ENCODE measurements at regions of chr2 and their contacts with region 1.

Region 1: DNA sequence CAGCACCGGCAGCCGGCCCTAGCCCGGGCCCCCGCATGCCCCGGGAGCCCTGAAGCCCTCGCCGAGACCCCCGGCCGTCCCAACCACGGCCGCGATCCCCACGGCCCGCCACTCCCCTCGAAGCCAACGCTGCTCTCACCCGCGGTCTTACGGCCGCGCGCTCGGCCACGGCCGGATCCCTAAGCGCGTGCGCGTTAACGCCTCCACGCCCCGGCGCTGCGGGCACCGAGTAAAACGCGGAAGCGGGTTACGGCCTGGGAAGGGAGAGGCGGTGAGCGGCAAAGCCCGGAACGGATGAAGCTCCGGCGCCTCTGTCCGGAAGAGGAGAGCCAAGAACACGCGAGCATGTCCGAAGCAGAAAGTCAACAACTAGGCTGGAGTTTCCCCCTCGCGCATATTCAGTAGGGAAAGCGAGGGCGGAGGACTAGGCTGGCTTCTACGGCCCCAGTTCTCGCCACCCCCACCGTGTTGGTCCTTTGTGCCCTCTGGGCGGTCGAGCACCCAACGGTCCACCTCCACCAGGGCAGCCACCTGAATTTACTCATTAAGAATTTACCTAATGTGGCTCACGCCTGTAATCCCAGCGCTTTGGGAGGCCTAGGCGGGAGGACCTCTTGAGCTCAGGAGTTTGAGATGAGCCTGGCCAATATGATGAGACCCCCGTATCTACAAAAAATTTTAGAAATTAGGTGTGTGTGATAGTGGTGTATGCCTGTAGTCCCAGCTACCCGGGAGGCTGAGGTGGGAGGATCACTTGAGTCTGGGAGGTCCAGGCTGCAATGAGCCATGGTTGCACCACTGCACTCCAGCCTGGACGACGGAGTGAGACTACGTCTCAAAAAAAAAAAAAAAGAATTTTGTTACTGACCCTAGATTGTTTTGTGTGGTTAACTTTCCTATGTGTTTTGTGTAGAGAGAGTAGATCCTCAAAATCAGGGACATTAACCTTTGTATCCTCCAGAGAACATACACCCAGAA is at the start of gene KANSL3:
- DNase-seq: peak; percentile 89 to 91
- ATAC-seq: peak; percentile 84 to 92 (median 90)
- H3K4me3 ChIP-seq: peak within 1 kb of the TSS; percentile 60 to 90 (median 74)
- H3K27ac ChIP-seq: peak within 1 kb of the TSS; percentile 88 to 98 (median 94)
- H3K4me1 ChIP-seq: peaks cover 0 to 52% (median 36%) of the 10 kb centered on the region in 9 donors
- H3K27me3 ChIP-seq: no peaks in the 10 kb centered on the region
- CTCF ChIP-seq: no peak
- total RNA-seq, gene KANSL3: 25.4 to 38.1 (median 31.7) TPM

Region 2: DNA sequence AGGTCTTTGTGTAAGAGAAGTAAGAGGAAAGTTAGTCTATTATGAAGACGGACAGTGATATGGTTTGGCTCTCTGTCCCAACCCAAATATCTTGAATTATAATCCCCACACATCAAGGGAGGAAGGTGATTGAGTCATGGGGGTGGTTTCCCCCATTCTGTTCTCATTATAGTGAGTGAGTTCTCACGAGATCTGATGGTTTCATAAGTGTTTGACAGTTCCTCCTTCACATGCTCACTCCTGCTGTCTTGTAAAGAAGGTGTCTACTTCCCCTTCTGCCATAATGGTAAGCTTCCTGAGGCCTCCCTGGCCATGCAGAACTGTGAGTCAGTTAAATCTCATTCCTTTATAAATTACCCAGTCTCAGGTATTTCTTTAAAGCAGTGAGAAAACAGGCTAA is 200.9 kb before region 1 on chr2:
- intact Hi-C with region 1: no loop called
- DNase-seq: no peak
- ATAC-seq: no peak
- H3K4me3 ChIP-seq: no peak overlapping the region
- H3K27ac ChIP-seq: no peak overlapping the region
- H3K4me1 ChIP-seq: no peaks in the 10 kb centered on the region
- H3K27me3 ChIP-seq: no peaks in the 10 kb centered on the region
- CTCF ChIP-seq: no peak

Region 3: GRCh38 chr2:96536445-96537065 is 101.9 kb before region 1 on chr2 and contains the start of gene ARID5A:
- intact Hi-C with region 1: loop called in 2 of 10 experiments (anchors 10 kb)
- DNase-seq: peak; percentile 95 to 96
- ATAC-seq: peak; percentile 69 to 88 (median 76)
- H3K4me3 ChIP-seq: peak within 1 kb of the TSS; percentile 73 to 99 (median 96)
- H3K27ac ChIP-seq: peak within 1 kb of the TSS; percentile 68 to 100 (median 97)
- H3K4me1 ChIP-seq: peaks cover 29 to 89% (median 76%) of the 10 kb centered on the region in 9 donors
- H3K27me3 ChIP-seq: no peaks in the 10 kb centered on the region
- CTCF ChIP-seq: peak; percentile 13 to 59 (median 42)
- total RNA-seq, gene ARID5A: 12.0 to 121 (median 43.5) TPM

Region 4: DNA sequence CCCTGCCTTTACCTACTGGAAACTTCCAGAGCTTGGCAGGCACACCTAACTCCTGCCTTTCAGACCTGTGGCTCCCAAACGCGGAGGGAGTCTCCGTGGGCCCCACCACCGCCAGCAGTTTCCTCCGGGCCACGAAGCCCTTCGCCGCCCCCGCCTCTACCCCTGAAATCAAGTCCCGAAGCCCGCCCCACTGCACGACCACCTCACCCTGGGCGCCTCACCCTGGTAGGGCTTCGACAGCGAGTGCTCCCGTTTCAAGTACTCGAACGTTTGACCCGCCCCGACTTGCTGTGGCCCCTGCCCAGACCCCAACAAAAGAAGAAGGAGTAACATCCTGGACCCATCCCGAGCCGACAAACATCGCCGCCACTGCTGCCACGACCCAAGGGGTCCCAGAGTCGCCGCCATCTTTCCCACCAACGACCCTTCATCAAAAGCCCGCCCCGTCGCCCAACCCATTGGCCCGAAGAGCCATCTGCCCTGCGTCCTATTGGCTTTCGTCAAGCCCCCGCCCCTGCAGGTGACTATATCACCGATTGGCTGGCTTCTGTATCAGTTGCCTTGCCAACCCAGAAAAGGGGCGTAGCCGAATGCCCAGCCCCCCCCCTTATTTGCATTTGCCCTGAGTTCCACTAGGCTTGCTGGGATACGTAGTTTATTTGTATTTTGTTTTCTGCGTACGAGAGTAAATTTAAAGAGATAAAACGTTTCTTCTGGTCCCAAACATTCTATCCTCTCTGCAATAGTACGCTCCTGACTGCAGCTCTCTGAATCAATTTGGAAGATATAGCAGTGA is 101.4 kb after region 1 on chr2 and contains the start of gene LMAN2L:
- intact Hi-C with region 1: loop called in 4 of 10 experiments (anchors 1 to 5 kb)
- DNase-seq: peak; percentile 95 to 99
- ATAC-seq: peak; percentile 96 to 100 (median 100)
- H3K4me3 ChIP-seq: peak within 1 kb of the TSS; percentile 69 to 93 (median 80)
- H3K27ac ChIP-seq: peak within 1 kb of the TSS; percentile 34 to 84 (median 76)
- H3K4me1 ChIP-seq: peaks cover 0 to 49% (median 28%) of the 10 kb centered on the region in 9 donors
- H3K27me3 ChIP-seq: no peaks in the 10 kb centered on the region
- CTCF ChIP-seq: peak in 1 of 9 donors; percentile 15
- total RNA-seq, gene LMAN2L: 13.3 to 30.9 (median 18.8) TPM

Region 5: GRCh38 chr2:96816128-96816835 is 177.8 kb after region 1 on chr2 and contains the start of gene CNNM3:
- intact Hi-C with region 1: loop called in 1 of 10 experiments (anchors 10 kb)
- DNase-seq: peak; percentile 97 to 98
- ATAC-seq: peak; percentile 94 to 98 (median 96)
- H3K4me3 ChIP-seq: peak within 1 kb of the TSS; percentile 27 to 96 (median 84)
- H3K27ac ChIP-seq: peak within 1 kb of the TSS; percentile 92 to 97 (median 96)
- H3K4me1 ChIP-seq: peaks cover 27 to 71% (median 61%) of the 10 kb centered on the region in 9 donors
- H3K27me3 ChIP-seq: no peaks in the 10 kb centered on the region
- CTCF ChIP-seq: peak; percentile 46 to 91 (median 80)
- total RNA-seq, gene CNNM3: 7.4 to 18.3 (median 13.8) TPM

Region 6: DNA sequence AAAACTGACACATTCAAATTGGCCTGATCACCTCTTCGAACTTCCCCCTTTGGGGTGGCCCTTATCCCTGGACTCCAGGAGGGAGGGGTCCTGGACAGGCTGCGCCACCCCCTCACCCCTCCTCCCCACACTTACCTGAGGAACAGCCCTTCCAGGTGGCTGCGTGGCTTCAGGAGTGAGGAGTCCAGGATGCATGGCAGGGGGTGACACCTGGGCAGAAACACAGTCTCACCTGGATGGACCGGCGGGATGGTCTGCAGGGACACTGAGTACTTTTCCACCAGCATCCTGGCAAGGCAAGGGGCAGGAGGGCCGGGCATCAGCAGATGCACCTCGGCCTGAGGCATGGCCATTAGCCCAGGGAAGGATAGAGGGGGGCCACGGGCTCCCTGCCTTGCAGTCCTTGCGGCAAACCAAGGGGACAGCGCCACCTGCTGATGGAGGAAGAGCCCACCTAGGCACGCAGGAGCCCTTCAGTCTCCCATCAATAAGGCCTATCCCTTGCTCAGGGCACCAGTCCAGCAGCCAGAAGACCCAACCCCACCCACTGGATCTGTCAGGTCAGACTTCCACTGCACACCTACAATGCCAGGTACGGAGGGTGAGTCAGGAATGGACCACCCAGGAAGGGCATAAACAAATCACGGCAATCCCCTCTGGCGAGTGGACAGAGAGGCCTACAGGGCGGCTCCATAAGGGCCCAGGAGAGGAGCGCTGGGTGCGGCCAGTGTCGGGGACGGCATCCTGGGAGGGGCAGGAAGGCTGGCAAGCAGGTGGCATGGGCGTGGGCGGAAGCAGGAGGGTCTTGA is 321.9 kb after region 1 on chr2:
- intact Hi-C with region 1: loop called in 1 of 10 experiments (anchors 10 kb)
- DNase-seq: peak; percentile 91 to 92
- ATAC-seq: peak; percentile 93 to 98 (median 96)
- H3K4me3 ChIP-seq: no peak overlapping the region
- H3K27ac ChIP-seq: no peak overlapping the region
- H3K4me1 ChIP-seq: peaks cover 0 to 11% (median 0%) of the 10 kb centered on the region in 9 donors
- H3K27me3 ChIP-seq: no peaks in the 10 kb centered on the region
- CTCF ChIP-seq: peak; percentile 87 to 97 (median 92)

Measured in heart right ventricle (tissue), 16 donors.